K562 (cell line): ENCODE measurements at regions of chr7 and their contacts with region 1.

Region 1: GRCh38 chr7:151368136-151368571 is 26.5 kb downstream of the NUB1 start:
- DNase-seq: peak; percentile 88 to 94 (median 92)
- ATAC-seq: peak; percentile 100
- H3K4me3 ChIP-seq: no peak overlapping the region
- H3K27ac ChIP-seq: no peak overlapping the region
- H3K4me1 ChIP-seq: peaks cover 0 to 4% of the 10 kb centered on the region in 2 experiments; a peak in 3 of 5 replicates
- H3K27me3 ChIP-seq: no peaks in the 10 kb centered on the region
- CTCF ChIP-seq: peak; percentile 96 to 99 (median 98)
- EP300 ChIP-seq: no peak
- POLR2A ChIP-seq: no peak
- RAD21 ChIP-seq: peak; percentile 85 to 96

Region 2: DNA sequence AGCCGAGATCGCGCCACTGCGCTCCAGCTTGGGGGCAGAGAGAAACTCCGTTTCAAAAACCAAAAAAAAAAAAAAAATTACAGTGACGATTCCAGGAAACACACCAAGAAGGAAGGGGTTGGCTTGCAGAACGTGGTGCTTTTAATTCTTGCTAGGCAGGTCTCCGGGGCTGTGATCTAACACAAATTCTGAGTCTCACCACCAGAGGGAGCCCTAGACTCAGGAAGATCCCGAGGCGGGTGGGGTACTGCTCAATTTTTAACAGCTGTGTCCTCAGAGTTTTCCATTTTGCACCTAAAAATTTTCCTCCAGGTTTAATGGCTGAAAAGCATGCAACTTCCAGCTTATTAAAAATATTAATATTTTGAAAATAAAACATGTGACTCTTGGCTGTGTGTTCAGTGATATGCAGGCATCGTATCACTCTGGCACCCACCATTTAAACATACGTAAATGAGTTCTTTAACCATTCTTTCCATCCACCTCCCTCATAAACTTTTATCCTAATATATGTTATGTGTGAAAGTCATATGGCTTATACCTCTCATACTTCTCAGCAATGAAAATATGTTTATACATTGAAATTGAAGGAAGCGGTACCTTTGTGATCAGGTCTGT is 53.0 kb before region 1 on chr7:
- CTCF ChIA-PET with region 1: no interaction called
- POLR2A ChIA-PET with region 1: no interaction called
- in situ Hi-C with region 1: no loop called
- intact Hi-C with region 1: loop called (anchors 1 kb)
- DNase-seq: peak; percentile 87 to 95 (median 92)
- ATAC-seq: peak; percentile 98
- H3K4me3 ChIP-seq: no peak overlapping the region
- H3K27ac ChIP-seq: no peak overlapping the region
- H3K4me1 ChIP-seq: peaks cover 0 to 3% of the 10 kb centered on the region in 2 experiments; a peak in 1 of 5 replicates
- H3K27me3 ChIP-seq: peaks cover 3 to 8% of the 10 kb centered on the region in 2 experiments; a peak in 3 of 5 replicates
- CTCF ChIP-seq: peak; percentile 89 to 98 (median 94)
- EP300 ChIP-seq: no peak
- POLR2A ChIP-seq: no peak
- RAD21 ChIP-seq: peak; percentile 97 to 98

Region 3: DNA sequence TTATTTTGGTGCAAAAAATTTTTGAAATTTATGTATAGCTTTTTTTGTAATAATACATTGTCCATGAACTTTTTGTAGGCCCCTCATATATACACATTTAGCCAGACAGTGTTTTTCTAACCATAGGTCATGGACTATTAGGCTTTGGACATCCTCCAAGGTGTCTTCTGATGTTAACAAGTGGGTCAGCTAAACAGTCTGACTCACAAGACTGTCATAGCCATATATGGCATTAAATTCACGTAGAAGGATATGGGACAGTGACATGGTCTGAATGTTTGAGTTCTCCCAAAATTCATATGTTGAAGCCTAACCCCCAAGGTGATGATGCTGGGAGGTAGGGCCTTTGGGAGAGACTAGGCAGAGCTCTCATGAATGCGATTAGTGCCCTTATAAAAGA is 40.5 kb before region 1 on chr7:
- CTCF ChIA-PET with region 1: no interaction called
- POLR2A ChIA-PET with region 1: no interaction called
- in situ Hi-C with region 1: no loop called
- intact Hi-C with region 1: no loop called
- DNase-seq: no peak
- ATAC-seq: no peak
- H3K4me3 ChIP-seq: no peak overlapping the region
- H3K27ac ChIP-seq: no peak overlapping the region
- H3K4me1 ChIP-seq: no peaks in the 10 kb centered on the region
- H3K27me3 ChIP-seq: peaks cover 4 to 14% of the 10 kb centered on the region in 2 experiments; a peak in 3 of 5 replicates
- CTCF ChIP-seq: no peak
- EP300 ChIP-seq: no peak
- POLR2A ChIP-seq: no peak
- RAD21 ChIP-seq: no peak

Region 4: DNA sequence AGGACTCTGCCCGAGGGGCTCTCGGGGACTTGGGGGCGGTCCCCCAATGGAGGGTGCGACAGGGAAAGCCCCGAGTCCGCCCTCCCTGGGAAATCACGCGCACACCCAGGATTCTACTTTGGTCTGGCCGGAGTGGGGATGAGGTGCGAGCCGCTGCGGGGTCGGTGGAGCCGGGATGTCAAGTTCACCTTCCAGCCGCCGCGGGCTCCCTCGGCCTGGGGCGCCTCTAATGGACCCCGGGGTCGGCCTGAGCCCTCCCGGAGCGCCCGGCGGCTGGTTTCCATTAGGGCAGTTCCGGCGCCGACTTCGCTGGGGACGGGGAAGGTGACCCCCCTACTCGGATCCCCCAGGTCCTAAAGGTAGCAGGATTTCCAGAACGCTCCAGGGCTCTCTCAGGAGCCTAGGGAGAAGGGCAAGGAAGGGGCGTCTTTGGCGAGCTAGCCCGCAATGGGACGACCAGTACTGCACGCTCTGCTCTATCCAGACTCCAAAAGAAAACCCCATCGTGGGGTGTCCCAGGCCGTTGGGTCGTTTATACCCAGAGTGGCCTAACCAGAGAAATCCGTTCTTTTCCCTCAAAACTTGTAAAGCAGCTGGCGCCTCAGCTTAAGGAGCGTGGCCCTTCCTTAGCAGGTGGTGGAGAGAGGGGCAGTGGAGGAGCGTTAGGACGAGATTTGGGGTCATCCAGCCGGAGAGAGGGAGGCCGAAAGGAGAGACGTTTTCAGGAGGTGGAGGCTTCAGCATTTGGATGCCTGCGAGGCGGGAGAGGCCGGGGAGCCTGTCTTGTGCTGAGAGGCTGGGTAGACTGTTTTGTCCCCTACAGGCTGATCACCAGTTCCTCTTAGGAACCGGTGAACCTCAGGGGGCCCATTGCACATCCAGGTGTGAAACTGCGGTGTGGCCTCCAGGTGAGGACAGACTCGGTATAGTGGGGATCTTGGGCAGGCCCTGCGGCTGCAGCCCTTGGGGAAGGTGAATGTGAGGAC is 42.5 kb after region 1 on chr7:
- CTCF ChIA-PET with region 1: no interaction called
- POLR2A ChIA-PET with region 1: no interaction called
- in situ Hi-C with region 1: no loop called
- intact Hi-C with region 1: loop called (anchors 1 kb)
- DNase-seq: no peak
- ATAC-seq: no peak
- H3K4me3 ChIP-seq: no peak overlapping the region
- H3K27ac ChIP-seq: no peak overlapping the region
- H3K4me1 ChIP-seq: peaks cover 11 to 29% of the 10 kb centered on the region in 2 experiments
- H3K27me3 ChIP-seq: peaks cover 4 to 6% of the 10 kb centered on the region in 2 experiments; a peak in 1 of 5 replicates
- CTCF ChIP-seq: no peak
- EP300 ChIP-seq: no peak
- POLR2A ChIP-seq: no peak
- RAD21 ChIP-seq: no peak

Region 5: GRCh38 chr7:151631968-151632749 is 264.0 kb after region 1 on chr7:
- CTCF ChIA-PET with region 1: no interaction called
- POLR2A ChIA-PET with region 1: no interaction called
- in situ Hi-C with region 1: no loop called
- intact Hi-C with region 1: loop called (anchors 10 kb)
- DNase-seq: peak; percentile 89 to 99 (median 96)
- ATAC-seq: peak; percentile 96
- H3K4me3 ChIP-seq: peak overlapping the region; percentile 54
- H3K27ac ChIP-seq: no peak overlapping the region
- H3K4me1 ChIP-seq: peaks cover 6 to 15% of the 10 kb centered on the region in 2 experiments; a peak in 3 of 5 replicates
- H3K27me3 ChIP-seq: peaks cover 28 to 33% of the 10 kb centered on the region in 2 experiments
- CTCF ChIP-seq: peak; percentile 13 to 74 (median 58); a peak in 4 of 6 replicates
- EP300 ChIP-seq: no peak
- POLR2A ChIP-seq: no peak
- RAD21 ChIP-seq: peak in 1 of 2 experiments; percentile 39; a peak in 3 of 4 replicates

Region 6: GRCh38 chr7:151759591-151760042 is 391.5 kb after region 1 on chr7:
- CTCF ChIA-PET with region 1: interaction called, 5 read pairs
- POLR2A ChIA-PET with region 1: no interaction called
- in situ Hi-C with region 1: no loop called
- intact Hi-C with region 1: loop called (anchors 2 kb)
- DNase-seq: peak; percentile 77 to 91 (median 86)
- ATAC-seq: peak; percentile 90
- H3K4me3 ChIP-seq: no peak overlapping the region
- H3K27ac ChIP-seq: no peak overlapping the region
- H3K4me1 ChIP-seq: peaks cover 0 to 7% of the 10 kb centered on the region in 2 experiments; a peak in 3 of 5 replicates
- H3K27me3 ChIP-seq: peaks cover 43 to 91% of the 10 kb centered on the region in 2 experiments
- CTCF ChIP-seq: peak; percentile 88 to 97 (median 96)
- EP300 ChIP-seq: no peak
- POLR2A ChIP-seq: no peak
- RAD21 ChIP-seq: peak; percentile 78 to 88